Activated naive CD4-positive, alpha-beta T cell treated with anti-CD3 and anti-CD28 coated beads for 36 hours (primary cell): ENCODE measurements at regions of chr12 and their contacts with region 1.

Region 1: DNA sequence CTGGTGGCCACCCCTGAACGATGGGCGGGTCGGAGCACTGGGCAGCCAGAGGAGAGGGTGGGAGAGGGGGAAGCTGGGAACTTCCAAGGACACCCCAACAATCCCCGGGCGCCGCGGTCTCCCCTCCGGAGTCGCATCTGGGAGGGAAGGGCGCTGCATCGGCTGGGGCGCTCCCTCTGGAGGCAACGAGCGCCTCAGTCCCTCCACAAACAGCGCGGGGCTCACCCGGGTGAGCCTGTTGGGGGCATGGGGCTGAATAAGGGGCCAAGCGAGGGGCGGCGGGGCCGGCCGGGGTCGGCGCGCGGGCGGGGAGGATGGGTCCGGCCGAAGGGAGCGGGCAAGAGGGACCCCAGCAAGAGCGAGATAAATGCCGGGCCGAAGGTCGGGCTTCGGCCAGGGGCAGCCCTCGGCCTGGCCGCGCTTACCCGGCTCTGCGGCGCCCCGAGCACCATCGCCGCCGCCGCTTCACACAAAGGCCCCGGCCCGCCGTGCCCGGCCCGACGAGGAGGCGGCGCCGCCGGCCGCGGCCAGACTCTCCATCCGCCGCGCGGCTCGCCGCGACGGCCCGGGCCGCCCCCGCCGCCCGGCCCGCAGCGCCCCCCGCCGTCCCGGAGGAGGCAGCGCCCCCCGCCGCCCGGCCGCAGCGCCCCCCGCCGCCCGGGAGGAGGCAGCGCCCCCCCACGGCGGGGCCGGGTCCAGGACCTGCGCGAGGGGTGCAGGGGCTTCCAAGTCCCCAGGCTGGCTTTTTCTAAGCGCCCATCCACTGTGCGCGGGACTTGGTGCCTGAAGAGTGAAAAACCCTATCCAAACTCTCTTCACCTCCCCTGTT is at the start of gene ZBTB39:
- DNase-seq: peak; percentile 59
- H3K4me3 Mint-ChIP-seq: peak within 1 kb of the TSS; percentile 92
- H3K27ac Mint-ChIP-seq: peak within 1 kb of the TSS; percentile 90
- H3K4me1 Mint-ChIP-seq: peaks cover 72% of the 10 kb centered on the region
- H3K27me3 Mint-ChIP-seq: no peaks in the 10 kb centered on the region
- total RNA-seq, gene ZBTB39: 5.1 to 5.5 TPM

Region 2: GRCh38 chr12:56521590-56522371 is 484.4 kb before region 1 on chr12 and contains the start of gene RBMS2:
- CTCF ChIA-PET with region 1: no interaction called
- intact Hi-C with region 1: loop called (anchors 10 kb)
- DNase-seq: peak; percentile 56
- H3K4me3 Mint-ChIP-seq: peak within 1 kb of the TSS; percentile 62
- H3K27ac Mint-ChIP-seq: no peak within 1 kb of the TSS
- H3K4me1 Mint-ChIP-seq: peaks cover 28% of the 10 kb centered on the region
- H3K27me3 Mint-ChIP-seq: no peaks in the 10 kb centered on the region
- total RNA-seq, gene RBMS2: 2.5 to 5.1 TPM

Region 3: DNA sequence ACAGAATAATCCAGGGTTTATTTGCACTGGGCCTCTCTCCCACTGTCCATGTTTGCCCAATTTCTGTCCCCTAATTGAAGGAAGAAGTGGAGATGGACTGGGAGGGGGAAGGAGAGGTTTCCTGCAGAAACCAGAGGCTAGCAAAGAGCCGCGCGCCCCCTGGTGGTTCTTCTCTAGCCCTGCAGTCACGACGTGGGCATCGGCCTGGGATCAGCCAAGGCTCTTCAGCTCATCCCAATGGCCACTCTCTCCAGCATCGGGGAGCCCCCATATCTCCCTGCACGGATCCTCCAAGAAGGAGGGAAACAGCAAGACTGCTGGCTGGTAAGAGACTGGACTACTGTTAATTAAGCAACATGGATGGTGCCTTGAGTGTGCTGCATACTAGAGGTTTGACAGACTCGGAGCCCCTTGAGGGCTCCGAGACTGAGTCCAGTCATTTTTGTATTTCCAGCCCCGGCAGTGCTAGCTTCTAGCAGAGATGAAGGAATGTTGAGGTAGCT is 18.6 kb before region 1 on chr12:
- CTCF ChIA-PET with region 1: interaction called, 64 read pairs
- intact Hi-C with region 1: no loop called
- DNase-seq: peak; percentile 84
- H3K4me3 Mint-ChIP-seq: no peak overlapping the region
- H3K27ac Mint-ChIP-seq: no peak overlapping the region
- H3K4me1 Mint-ChIP-seq: peaks cover 12% of the 10 kb centered on the region
- H3K27me3 Mint-ChIP-seq: no peaks in the 10 kb centered on the region

Region 4: DNA sequence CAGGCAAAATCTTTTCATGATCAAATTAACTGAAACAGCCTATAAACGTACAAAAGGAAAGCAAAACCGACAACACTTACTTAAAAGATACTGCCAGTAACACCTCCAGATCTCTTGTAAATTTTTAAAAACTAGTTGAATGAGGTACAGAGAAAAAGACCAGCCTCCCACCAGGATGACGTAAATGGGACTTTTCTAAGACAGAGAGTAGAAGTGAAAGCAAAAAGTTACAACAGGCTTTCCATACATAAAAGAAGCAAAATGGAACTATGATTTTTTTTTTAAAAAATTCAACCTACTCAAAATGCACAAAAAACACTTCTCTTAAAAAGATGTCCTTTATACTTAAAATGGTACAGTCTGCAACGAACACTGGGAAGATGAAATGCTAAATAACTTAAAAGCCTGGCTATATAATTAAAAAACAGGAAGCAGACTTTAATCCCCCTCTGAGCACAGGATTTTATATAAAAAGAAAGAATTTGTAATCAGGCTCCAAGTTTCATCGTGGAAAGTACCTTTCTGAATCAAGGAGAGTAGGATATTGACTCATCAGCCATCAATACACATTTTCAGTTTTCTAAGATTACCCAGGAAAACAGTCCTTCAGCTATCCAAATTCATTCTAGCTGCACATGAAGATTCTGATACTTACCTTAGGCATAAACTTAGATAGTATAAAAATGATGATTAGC is 57.9 kb after region 1 on chr12:
- CTCF ChIA-PET with region 1: interaction called, 271 read pairs
- intact Hi-C with region 1: loop called (anchors 1 kb)
- DNase-seq: peak; percentile 81
- H3K4me3 Mint-ChIP-seq: peak overlapping the region; percentile 68
- H3K27ac Mint-ChIP-seq: peak overlapping the region; percentile 96
- H3K4me1 Mint-ChIP-seq: peaks cover 66% of the 10 kb centered on the region
- H3K27me3 Mint-ChIP-seq: no peaks in the 10 kb centered on the region

Region 5: DNA sequence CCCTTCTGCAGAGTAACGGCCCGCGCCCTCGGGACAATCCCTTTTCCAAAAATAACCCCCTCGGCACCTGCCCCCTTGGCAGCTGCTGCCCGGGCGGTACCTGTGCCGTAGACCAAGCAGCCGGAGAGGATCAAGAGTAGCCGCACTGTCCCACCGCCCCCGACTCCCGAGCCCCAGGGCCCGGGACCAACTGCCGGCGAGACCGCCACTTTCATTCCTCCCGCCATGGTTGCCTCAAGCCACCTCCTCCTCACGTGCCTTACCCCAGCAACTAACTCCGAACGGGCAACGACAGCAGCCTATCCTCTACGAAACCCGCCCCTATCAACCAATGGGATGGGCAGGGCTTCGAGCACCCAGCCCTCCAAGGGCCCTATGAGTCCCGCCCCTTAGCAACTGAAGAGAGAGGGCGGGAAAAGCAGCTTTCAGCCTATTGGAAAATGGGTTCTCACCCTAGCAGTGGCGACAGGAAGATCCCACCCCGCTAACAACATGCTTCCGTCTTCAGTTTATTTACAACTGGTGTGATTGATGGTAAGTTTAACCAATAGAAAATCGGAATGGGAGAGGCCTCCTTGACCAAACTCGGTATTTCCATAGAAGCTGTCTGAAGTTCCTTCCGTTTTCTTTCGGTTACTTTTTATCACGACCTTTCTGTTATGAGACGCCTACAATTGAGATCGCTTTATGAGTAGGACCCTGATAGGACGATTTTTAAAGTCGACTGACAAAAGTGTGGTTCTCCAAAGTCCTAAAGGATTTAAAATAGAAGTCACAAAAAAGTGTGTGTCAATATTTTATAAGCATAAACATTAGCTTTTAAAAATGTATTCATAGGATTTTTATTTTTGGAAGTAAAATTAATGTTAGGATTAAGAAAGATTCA is 72.6 kb after region 1 on chr12 and contains the start of gene NEMP1:
- CTCF ChIA-PET with region 1: interaction called, 10 read pairs
- intact Hi-C with region 1: no loop called
- DNase-seq: peak; percentile 98
- H3K4me3 Mint-ChIP-seq: peak within 1 kb of the TSS; percentile 99
- H3K27ac Mint-ChIP-seq: peak within 1 kb of the TSS; percentile 98
- H3K4me1 Mint-ChIP-seq: peaks cover 37% of the 10 kb centered on the region
- H3K27me3 Mint-ChIP-seq: no peaks in the 10 kb centered on the region
- total RNA-seq, gene NEMP1: 71.3 to 72.2 TPM

Region 6: DNA sequence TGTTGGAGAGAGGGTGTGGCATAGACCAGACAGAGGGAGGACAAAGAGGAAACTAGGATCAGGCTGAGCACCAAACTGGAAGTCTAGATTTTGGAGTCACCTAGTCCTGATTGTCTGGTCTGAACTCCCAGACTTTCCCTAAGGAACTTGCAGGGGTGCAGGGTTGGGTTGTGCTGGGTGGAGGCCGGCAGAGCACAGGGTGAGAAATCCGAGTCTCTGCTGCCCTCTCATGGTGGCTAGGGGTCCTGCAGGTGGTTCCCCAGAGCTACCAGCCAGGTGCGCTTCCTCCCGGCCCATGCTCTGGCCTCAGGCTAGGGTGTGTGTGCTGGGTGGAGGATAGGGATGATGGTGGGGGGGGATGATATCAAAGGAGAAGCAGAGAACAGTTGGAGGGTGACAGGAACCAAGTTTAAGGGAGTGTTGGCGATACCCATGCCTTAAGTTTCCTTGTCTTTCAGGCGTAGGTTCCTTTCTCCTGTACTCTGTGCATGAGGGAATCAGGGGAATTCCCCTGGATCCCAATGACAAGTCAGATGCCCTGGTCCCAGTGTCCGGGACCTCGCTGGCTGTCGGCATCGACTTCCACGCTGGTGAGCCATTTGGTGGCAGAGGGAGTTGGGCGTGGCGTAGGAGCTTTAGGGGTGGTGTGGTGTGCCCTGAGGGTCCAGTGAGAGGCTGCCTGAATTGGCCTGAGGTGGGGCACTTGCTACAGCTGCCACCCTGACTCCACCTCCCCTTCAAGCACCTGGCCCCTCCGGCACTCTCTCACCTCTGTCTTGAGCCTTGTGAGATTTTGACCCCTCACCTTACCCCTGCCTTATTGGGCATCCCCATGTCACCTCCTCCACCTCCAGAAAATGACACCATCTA is 177.0 kb after region 1 on chr12:
- CTCF ChIA-PET with region 1: interaction called, 10 read pairs
- intact Hi-C with region 1: loop called (anchors 1 kb)
- DNase-seq: peak; percentile 90
- H3K4me3 Mint-ChIP-seq: no peak overlapping the region
- H3K27ac Mint-ChIP-seq: no peak overlapping the region
- H3K4me1 Mint-ChIP-seq: no peaks in the 10 kb centered on the region
- H3K27me3 Mint-ChIP-seq: no peaks in the 10 kb centered on the region